HepG2 (cell line): ENCODE measurements at regions of chr20 and their contacts with region 1.

Region 1: GRCh38 chr20:57991211-57991881 is 237.1 kb downstream of the ANKRD60 start:
- DNase-seq: no peak
- ATAC-seq: no peak
- H3K4me3 ChIP-seq: no peak overlapping the region
- H3K27ac ChIP-seq: no peak overlapping the region
- H3K4me1 ChIP-seq: no peaks in the 10 kb centered on the region
- H3K27me3 ChIP-seq: peaks cover 2 to 37% of the 10 kb centered on the region in 2 experiments; a peak in 4 of 5 replicates
- CTCF ChIP-seq: no peak
- EP300 ChIP-seq: no peak
- POLR2A ChIP-seq: no peak
- RAD21 ChIP-seq: no peak

Region 2: DNA sequence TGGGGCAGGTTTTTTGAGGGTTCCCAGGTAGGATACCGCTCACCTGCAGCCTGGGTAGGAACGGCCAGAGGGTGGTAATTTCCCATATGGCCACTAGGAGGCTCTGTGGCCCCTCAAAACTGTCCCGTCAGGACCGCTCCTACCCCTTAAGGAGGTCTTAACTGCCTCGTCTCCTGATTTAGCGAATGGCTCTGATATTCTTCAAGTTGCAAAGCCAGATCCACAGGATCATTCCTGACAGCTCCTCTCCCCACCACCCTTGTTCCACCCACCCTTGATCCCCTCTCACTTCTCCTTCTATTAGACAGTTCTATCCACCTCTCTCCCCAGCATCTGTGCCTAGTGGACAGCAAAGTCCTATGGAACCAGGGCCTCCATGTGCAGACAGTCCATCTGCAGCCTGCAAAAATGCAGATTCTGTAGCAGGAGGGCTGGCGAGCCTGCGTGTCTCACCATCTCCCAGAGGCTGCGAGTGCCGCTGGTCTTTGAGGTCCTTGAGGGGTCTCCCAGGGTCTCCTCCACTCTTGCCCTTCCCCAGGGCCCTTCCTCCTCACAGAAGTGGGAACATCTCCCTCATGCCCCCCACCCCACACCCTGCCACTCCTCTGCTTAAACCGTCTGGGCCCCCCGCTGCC is 336.9 kb before region 1 on chr20:
- CTCF ChIA-PET with region 1: no interaction called
- POLR2A ChIA-PET with region 1: no interaction called
- in situ Hi-C with region 1: no loop called
- intact Hi-C with region 1: no loop called
- DNase-seq: peak; percentile 42
- ATAC-seq: peak; percentile 74
- H3K4me3 ChIP-seq: no peak overlapping the region
- H3K27ac ChIP-seq: no peak overlapping the region
- H3K4me1 ChIP-seq: peaks cover 13% of the 10 kb centered on the region
- H3K27me3 ChIP-seq: peaks cover 35 to 97% of the 10 kb centered on the region in 2 experiments
- CTCF ChIP-seq: peak; percentile 92
- EP300 ChIP-seq: no peak
- POLR2A ChIP-seq: no peak
- RAD21 ChIP-seq: peak; percentile 69

Region 3: GRCh38 chr20:58037631-58038030 is 46.3 kb after region 1 on chr20:
- CTCF ChIA-PET with region 1: no interaction called
- POLR2A ChIA-PET with region 1: no interaction called
- in situ Hi-C with region 1: no loop called
- intact Hi-C with region 1: loop called (anchors 1 kb)
- DNase-seq: no peak
- ATAC-seq: no peak
- H3K4me3 ChIP-seq: no peak overlapping the region
- H3K27ac ChIP-seq: no peak overlapping the region
- H3K4me1 ChIP-seq: no peaks in the 10 kb centered on the region
- H3K27me3 ChIP-seq: peaks cover 2 to 36% of the 10 kb centered on the region in 2 experiments; a peak in 3 of 5 replicates
- CTCF ChIP-seq: no peak
- EP300 ChIP-seq: no peak
- POLR2A ChIP-seq: no peak
- RAD21 ChIP-seq: no peak

Region 4: DNA sequence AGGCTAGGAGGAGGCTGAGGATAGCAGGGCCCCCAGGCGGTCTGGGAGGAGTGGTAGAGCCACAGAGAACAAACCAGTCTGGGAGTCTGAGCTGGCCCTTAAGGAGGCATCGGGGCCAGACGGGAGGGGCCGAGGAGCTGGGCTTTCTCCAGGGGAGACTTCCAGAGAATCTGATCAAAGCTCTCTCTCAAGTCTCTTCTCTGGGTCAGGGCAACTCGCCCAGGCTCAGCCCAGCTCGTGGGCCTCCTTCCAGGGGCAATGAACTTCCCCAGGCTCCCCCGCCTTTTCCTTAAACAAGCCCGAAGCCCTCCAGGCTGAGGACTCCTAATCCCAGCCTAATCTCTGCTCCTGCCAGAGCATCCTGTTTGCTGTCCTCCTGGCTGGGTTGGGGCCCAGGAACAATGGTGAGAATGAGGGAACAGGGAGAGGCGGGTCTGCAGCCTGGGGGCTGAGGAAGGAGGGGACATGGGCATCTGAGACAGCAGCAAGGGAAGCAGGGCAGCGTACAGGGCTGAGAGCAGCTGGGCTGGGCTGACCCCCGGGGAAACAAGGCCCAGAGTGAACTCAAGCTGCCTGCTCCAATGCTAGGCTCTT is 63.5 kb after region 1 on chr20:
- CTCF ChIA-PET with region 1: no interaction called
- POLR2A ChIA-PET with region 1: no interaction called
- in situ Hi-C with region 1: no loop called
- intact Hi-C with region 1: no loop called
- DNase-seq: no peak
- ATAC-seq: no peak; the same call in 2 of the 3 replicates
- H3K4me3 ChIP-seq: no peak overlapping the region
- H3K27ac ChIP-seq: no peak overlapping the region
- H3K4me1 ChIP-seq: no peaks in the 10 kb centered on the region
- H3K27me3 ChIP-seq: peaks cover 0 to 4% of the 10 kb centered on the region in 2 experiments; a peak in 2 of 5 replicates
- CTCF ChIP-seq: no peak
- EP300 ChIP-seq: no peak
- POLR2A ChIP-seq: no peak
- RAD21 ChIP-seq: no peak

Region 5: GRCh38 chr20:58433764-58434163 is 442.4 kb after region 1 on chr20:
- CTCF ChIA-PET with region 1: no interaction called
- POLR2A ChIA-PET with region 1: no interaction called
- in situ Hi-C with region 1: no loop called
- intact Hi-C with region 1: loop called (anchors 5 kb)
- DNase-seq: no peak
- ATAC-seq: no peak
- H3K4me3 ChIP-seq: no peak overlapping the region
- H3K27ac ChIP-seq: no peak overlapping the region
- H3K4me1 ChIP-seq: peaks cover 44% of the 10 kb centered on the region
- H3K27me3 ChIP-seq: no peaks in the 10 kb centered on the region
- CTCF ChIP-seq: no peak
- EP300 ChIP-seq: no peak
- POLR2A ChIP-seq: no peak
- RAD21 ChIP-seq: no peak